Activated CD4-positive, alpha-beta T cell treated with anti-CD3 and anti-CD28 coated beads for 36 hours (primary cell): ENCODE measurements at regions of chr5 and their contacts with region 1.

Region 1: DNA sequence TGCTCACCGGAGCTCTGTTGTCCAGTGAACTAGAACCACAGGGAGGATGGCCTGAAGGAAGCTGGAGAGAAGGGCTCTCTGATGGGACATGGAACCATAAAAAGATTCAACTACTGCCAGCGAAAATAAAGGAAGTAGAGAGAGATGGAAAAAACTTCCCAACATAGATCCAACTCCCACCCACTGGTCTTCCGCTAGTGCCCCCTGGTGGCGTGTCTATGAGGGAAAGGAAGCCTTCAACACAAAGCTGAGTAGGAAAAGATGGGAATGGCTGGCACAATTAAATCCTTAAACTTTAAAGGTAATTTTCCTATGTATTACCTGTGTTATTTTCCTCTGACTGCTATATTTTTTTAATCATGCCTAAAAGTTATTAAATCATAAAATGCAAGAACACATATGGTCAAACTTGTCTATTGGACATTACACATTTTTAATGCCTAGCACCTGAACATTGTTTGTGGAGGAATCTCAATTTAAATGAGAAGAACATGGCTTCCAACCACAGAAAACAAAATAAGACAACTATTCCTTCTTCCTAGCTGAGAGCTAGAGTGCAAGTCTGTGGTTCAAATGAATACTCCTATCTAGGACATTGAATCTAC is 51.5 kb downstream of the CEP120 start:
- DNase-seq: peak; percentile 50
- ATAC-seq: no peak
- H3K4me3 Mint-ChIP-seq: no peak overlapping the region
- H3K27ac Mint-ChIP-seq: no peak overlapping the region
- H3K4me1 Mint-ChIP-seq: peaks cover 2% of the 10 kb centered on the region
- H3K27me3 Mint-ChIP-seq: no peaks in the 10 kb centered on the region

Region 2: DNA sequence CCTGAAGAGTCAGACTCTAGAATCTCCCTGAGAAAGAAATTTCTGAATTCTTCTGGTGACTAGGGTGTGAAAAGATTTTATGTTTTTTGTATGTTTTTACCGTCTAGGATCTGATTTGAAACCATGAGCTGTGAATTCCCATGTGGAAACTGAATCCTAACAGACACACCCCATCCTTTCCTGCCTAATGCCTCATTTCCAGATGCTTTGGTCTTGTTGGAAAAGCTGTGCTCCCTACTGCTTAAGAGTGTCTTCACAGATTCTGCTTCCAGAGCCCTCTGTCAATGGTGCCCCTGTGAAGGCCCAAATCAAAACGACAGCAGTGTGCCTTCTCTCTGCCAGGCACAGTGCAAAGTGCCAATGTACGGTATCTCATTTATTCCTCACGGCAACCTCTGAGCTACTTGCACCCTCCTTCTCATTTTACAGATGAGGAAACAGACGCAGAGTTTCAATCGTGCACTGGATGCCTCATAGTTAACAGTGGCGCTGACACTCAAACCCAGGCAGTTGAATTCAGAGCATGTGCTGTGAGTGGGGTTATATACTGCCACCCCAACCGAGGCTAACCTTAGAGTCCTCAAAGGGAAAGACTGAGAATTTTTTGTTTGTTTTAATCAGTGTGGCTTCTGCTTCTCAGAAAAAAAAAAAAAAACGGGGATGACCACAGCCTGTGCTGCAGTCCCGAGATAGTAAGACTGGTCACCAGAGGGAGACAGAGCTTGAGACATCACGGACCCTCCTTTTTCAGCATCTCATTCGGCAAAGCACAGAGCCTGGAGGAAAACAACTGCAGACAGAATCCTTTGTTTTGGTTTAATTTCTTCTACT is 871.2 kb before region 1 on chr5:
- CTCF ChIA-PET with region 1: no interaction called
- POLR2A ChIA-PET with region 1: no interaction called
- intact Hi-C with region 1: loop called in 1 of 2 experiments (anchors 10 kb)
- DNase-seq: peak; percentile 13
- ATAC-seq: no peak
- H3K4me3 Mint-ChIP-seq: no peak overlapping the region
- H3K27ac Mint-ChIP-seq: no peak overlapping the region
- H3K4me1 Mint-ChIP-seq: no peaks in the 10 kb centered on the region
- H3K27me3 Mint-ChIP-seq: peaks cover 2% of the 10 kb centered on the region

Region 3: GRCh38 chr5:122896598-122897282 is 474.9 kb before region 1 on chr5:
- CTCF ChIA-PET with region 1: no interaction called
- POLR2A ChIA-PET with region 1: no interaction called
- intact Hi-C with region 1: loop called in 1 of 2 experiments (anchors 5 kb)
- DNase-seq: no peak
- ATAC-seq: no peak
- H3K4me3 Mint-ChIP-seq: no peak overlapping the region
- H3K27ac Mint-ChIP-seq: no peak overlapping the region
- H3K4me1 Mint-ChIP-seq: peaks cover under 1% of the 10 kb centered on the region
- H3K27me3 Mint-ChIP-seq: no peaks in the 10 kb centered on the region